Dendritic cell treated with granulocyte-macrophage colony-stimulating factor and Interleukin-4, amounts not matched to agents 40 ng/mL and 50 ng/mL, for 4 days (primary cell): ENCODE measurements at regions of chr14 and their contacts with region 1.

Region 1: DNA sequence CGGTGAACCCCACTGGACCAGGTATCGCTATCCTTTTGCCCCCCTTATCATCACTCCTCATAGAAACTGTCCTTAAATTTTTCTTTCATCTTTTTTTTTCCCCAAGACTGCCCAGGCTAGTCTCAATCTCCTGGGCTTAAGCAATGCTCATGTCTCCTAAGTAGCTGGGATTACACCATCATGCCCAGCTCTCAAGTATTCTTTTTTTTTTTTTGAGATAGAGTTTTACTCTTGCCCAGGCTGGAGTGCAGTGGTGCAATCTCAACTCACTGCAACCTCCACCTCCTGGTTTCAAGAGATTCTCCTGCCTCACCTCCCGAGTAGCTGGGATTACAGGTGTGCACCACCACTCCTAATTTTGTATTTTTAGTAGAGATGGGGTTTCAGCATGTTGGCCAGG is 9.7 kb downstream of the IRF2BPL start:
- H3K4me3 Mint-ChIP-seq: no peak overlapping the region
- H3K27ac Mint-ChIP-seq: no peak overlapping the region
- H3K4me1 Mint-ChIP-seq: peaks cover 19% of the 10 kb centered on the region
- H3K27me3 Mint-ChIP-seq: no peaks in the 10 kb centered on the region

Region 2: GRCh38 chr14:77053046-77053841 is 34.4 kb after region 1 on chr14:
- intact Hi-C with region 1: loop called (anchors 5 kb)
- H3K4me3 Mint-ChIP-seq: no peak overlapping the region
- H3K27ac Mint-ChIP-seq: no peak overlapping the region
- H3K4me1 Mint-ChIP-seq: peaks cover 31% of the 10 kb centered on the region
- H3K27me3 Mint-ChIP-seq: no peaks in the 10 kb centered on the region

Region 3: DNA sequence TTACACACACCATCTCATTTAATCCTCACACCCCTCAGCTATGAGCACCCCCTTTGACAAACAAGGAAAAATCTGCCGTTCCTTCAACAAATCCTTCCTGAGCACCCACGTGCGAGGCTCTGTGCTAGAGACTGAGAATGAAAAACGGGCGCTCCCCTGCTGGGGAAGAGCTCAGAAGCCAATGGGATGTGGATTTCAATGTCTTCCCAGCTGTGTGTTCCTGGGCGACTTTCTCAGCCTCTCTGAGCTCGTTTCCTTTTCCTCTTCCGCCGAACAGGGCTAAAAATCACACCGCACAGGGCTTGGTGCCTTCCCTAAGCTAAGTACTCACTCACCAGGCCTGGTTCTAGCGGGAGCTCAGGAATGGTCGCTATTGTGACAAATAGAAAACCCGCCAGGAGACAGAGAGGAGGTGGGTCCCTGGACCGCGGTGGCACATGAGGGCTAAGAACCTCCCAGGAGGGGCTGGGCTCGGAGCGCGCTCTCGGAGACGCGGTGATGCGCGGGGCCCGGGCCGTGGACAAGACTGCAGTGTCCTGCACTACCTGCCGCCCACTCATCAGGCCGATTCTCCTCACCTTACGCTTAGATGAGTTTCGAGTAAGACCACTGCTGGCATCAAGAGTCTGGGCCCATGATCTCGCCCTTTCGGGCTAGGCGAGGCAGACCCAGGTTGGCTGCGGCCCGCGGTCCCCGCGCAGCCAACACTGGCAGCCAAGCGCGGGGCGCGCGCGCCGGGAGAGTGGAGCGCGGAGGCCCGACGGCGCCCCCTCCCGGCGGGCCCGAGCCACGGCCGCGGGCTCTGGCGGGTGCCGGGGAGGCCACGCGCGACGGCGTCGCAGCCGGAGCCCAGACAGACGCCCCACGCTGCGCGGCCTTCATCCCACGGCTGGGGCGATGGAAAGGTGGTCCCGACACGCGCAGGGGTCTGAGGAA is 105.8 kb after region 1 on chr14:
- intact Hi-C with region 1: no loop called
- H3K4me3 Mint-ChIP-seq: peak overlapping the region; percentile 70
- H3K27ac Mint-ChIP-seq: no peak overlapping the region
- H3K4me1 Mint-ChIP-seq: peaks cover 56% of the 10 kb centered on the region
- H3K27me3 Mint-ChIP-seq: peaks cover 55% of the 10 kb centered on the region